Thyroid gland (tissue), 4 donors: ENCODE measurements at regions of chr7 and their contacts with region 1.

Region 1: GRCh38 chr7:42940985-42941847 is 9.0 kb downstream of the MRPL32 start:
- DNase-seq: peak; percentile 84 to 91
- H3K4me3 ChIP-seq: no peak overlapping the region
- H3K27ac ChIP-seq: no peak overlapping the region
- H3K4me1 ChIP-seq: no peaks in the 10 kb centered on the region
- H3K27me3 ChIP-seq: no peaks in the 10 kb centered on the region
- CTCF ChIP-seq: peak; percentile 60 to 90 (median 83)
- POLR2A ChIP-seq: no peak

Region 2: GRCh38 chr7:43135129-43135528 is 193.9 kb after region 1 on chr7:
- intact Hi-C with region 1: no loop called
- DNase-seq: no peak
- H3K4me3 ChIP-seq: no peak overlapping the region
- H3K27ac ChIP-seq: no peak overlapping the region
- H3K4me1 ChIP-seq: no peaks in the 10 kb centered on the region
- H3K27me3 ChIP-seq: no peaks in the 10 kb centered on the region
- CTCF ChIP-seq: no peak
- POLR2A ChIP-seq: no peak

Region 3: GRCh38 chr7:43260980-43261878 is 320.0 kb after region 1 on chr7:
- intact Hi-C with region 1: loop called (anchors 5 kb)
- DNase-seq: peak; percentile 79 to 83
- H3K4me3 ChIP-seq: no peak overlapping the region
- H3K27ac ChIP-seq: no peak overlapping the region
- H3K4me1 ChIP-seq: no peaks in the 10 kb centered on the region
- H3K27me3 ChIP-seq: no peaks in the 10 kb centered on the region
- CTCF ChIP-seq: peak; percentile 83 to 94 (median 87)
- POLR2A ChIP-seq: no peak

Region 4: DNA sequence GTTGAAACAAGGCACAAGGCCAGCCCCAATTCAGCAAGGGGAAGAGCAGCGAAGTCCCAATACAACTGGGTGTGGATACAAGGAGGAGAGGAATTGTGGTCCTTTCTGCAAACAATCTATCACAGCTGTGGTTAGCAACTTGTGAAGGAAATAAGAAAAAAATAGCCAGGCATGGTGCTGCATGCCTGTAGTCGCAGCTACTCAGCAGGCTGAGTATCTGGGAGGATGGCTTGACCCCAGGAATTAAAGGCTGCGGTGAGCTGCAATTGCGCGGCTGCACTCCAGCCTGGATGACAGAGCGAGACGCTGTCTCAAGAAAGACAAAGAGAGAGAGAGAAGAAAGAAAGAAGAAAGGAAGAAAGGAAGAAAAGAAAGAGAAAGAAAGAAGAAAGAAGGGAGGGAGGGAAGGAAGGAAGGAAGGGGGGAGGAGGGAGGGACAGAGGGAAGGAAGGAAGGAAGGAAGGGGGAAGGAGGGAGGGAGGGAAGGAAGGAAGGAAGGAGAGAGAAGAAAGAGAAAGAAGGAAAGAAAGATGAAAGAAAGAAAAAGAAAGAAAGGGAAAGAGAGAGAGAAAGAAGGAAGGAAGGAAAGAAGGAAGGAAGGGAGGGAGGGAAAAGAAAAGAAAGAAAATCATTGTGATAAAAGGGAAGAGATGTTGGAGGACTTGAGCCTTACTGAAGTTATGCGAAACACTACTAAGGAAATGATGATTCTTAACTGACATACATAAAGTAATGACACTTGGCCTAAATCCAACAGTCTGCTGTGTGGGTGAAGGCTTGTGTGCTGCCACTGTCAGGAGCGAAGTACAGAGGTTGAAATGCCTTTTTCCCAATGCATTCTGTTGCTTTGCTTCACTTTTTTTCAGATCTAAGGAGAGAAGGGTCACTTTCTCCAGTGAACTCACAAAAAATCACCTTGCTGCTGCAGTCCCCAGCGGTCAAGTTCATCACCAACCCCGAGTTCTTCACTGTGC is 524.7 kb after region 1 on chr7:
- intact Hi-C with region 1: loop called (anchors 10 kb)
- DNase-seq: no peak
- H3K4me3 ChIP-seq: no peak overlapping the region
- H3K27ac ChIP-seq: no peak overlapping the region
- H3K4me1 ChIP-seq: peaks cover 0 to 4% of the 10 kb centered on the region in 2 donors
- H3K27me3 ChIP-seq: no peaks in the 10 kb centered on the region
- CTCF ChIP-seq: no peak
- POLR2A ChIP-seq: no peak